ENCODE measurements at regions of chr12 and their contacts with region 1.

Region 1: GRCh38 chr12:82089369-82090060 is 268.7 kb downstream of the CCDC59 start:
- DNase-seq: no peak
- H3K4me3 Mint-ChIP-seq: peak overlapping the region; percentile 19
- H3K27ac Mint-ChIP-seq: peak overlapping the region; percentile 72
- H3K4me1 Mint-ChIP-seq: peaks cover 18% of the 10 kb centered on the region
- H3K27me3 Mint-ChIP-seq: no peaks in the 10 kb centered on the region
- CTCF ChIP-seq: no peak

Region 2: GRCh38 chr12:81520064-81520945 is 569.2 kb before region 1 on chr12:
- CTCF ChIA-PET with region 1: interaction called, 10 read pairs
- intact Hi-C with region 1: no loop called
- DNase-seq: no peak
- H3K4me3 Mint-ChIP-seq: peak overlapping the region; percentile 44
- H3K27ac Mint-ChIP-seq: peak overlapping the region; percentile 9
- H3K4me1 Mint-ChIP-seq: peaks cover 20% of the 10 kb centered on the region
- H3K27me3 Mint-ChIP-seq: no peaks in the 10 kb centered on the region
- CTCF ChIP-seq: no peak

Region 3: GRCh38 chr12:82019533-82019932 is 70.0 kb before region 1 on chr12:
- CTCF ChIA-PET with region 1: no interaction called
- intact Hi-C with region 1: loop called (anchors 2 kb)
- DNase-seq: no peak
- H3K4me3 Mint-ChIP-seq: no peak overlapping the region
- H3K27ac Mint-ChIP-seq: no peak overlapping the region
- H3K4me1 Mint-ChIP-seq: peaks cover 11% of the 10 kb centered on the region
- H3K27me3 Mint-ChIP-seq: no peaks in the 10 kb centered on the region
- CTCF ChIP-seq: no peak

Region 4: DNA sequence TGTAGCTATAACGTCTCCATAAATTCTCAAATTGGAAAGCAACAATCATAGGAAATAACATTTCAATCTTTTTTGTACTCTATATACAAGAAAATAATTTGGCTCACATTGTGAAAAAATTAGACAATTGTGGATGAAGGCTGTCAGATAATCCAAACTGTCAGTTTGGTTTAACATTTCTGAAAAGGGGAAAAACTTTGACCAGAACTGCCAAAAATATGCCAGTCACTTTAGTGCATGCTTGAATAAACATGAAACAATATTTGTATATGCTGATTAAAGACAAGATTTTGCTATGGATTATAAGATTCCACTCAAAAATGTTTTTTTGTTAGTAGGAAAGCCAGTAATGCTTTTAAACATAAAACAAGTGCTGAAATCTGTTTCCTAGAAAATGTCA is 229.8 kb after region 1 on chr12:
- CTCF ChIA-PET with region 1: no interaction called
- intact Hi-C with region 1: loop called (anchors 5 kb)
- DNase-seq: no peak
- H3K4me3 Mint-ChIP-seq: no peak overlapping the region
- H3K27ac Mint-ChIP-seq: no peak overlapping the region
- H3K4me1 Mint-ChIP-seq: peaks cover 8% of the 10 kb centered on the region
- H3K27me3 Mint-ChIP-seq: no peaks in the 10 kb centered on the region
- CTCF ChIP-seq: no peak